CD8-positive, alpha-beta T cell (primary cell): ENCODE measurements at regions of chr17 and their contacts with region 1.

Region 1: DNA sequence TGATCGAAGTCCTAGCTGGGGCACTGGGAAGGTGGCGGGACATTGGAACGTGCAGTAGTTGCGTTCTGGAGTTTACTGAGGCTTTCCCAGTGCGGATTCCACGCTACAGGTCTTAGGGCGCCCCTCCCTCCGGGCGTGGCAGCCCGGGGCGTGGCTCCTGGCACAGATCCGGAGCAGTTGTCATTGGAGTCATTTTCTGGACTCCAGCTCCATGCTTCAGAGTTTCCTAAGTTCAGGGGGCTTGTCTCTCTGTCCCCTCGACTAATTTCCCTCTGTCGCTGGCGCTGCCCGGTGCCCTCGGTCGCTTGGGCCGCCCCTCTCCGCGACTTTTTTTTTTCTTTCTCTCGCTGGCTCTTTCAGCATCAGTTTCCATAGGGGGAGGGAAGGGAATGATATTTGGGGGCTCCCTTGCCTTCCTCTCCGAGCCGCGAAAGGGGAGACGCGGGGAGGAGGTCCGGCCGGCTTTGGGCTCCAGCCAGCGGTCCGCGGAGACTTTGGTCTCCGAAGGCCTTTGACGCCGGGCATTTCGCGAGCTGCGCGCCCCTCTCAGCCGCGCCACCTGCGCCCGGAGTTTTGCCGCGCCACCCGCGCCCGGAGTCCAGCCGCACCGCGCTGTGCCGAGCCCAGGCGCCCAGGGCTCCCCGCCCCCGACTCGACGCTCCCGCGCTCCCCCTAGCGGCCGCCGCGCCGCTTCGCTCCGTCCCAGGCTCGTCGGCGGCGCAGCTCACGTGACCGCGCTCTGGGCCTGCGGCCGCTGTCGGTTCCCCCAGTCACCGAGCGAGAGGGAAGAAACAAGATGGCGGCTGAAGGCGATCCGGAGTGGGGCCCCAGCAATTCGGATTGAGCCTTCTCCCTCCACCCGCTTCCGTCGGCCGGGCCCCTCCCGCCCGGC is at the start of gene BPTF:
- DNase-seq: peak; percentile 82 to 97 (median 92)
- ATAC-seq: peak; percentile 69
- H3K4me3 ChIP-seq: peak within 1 kb of the TSS; percentile 75 to 85
- H3K4me3 Mint-ChIP-seq: peak within 1 kb of the TSS; percentile 99
- H3K27ac ChIP-seq: peak within 1 kb of the TSS; percentile 68 to 80
- H3K27ac Mint-ChIP-seq: peak within 1 kb of the TSS; percentile 100
- H3K4me1 ChIP-seq: peaks cover 33% of the 10 kb centered on the region
- H3K4me1 Mint-ChIP-seq: peaks cover 31% of the 10 kb centered on the region
- H3K27me3 ChIP-seq: no peaks in the 10 kb centered on the region
- H3K27me3 Mint-ChIP-seq: peaks cover 4% of the 10 kb centered on the region
- CTCF ChIP-seq: peak; percentile 94
- total RNA-seq, gene BPTF: 97.8 to 107 TPM

Region 2: DNA sequence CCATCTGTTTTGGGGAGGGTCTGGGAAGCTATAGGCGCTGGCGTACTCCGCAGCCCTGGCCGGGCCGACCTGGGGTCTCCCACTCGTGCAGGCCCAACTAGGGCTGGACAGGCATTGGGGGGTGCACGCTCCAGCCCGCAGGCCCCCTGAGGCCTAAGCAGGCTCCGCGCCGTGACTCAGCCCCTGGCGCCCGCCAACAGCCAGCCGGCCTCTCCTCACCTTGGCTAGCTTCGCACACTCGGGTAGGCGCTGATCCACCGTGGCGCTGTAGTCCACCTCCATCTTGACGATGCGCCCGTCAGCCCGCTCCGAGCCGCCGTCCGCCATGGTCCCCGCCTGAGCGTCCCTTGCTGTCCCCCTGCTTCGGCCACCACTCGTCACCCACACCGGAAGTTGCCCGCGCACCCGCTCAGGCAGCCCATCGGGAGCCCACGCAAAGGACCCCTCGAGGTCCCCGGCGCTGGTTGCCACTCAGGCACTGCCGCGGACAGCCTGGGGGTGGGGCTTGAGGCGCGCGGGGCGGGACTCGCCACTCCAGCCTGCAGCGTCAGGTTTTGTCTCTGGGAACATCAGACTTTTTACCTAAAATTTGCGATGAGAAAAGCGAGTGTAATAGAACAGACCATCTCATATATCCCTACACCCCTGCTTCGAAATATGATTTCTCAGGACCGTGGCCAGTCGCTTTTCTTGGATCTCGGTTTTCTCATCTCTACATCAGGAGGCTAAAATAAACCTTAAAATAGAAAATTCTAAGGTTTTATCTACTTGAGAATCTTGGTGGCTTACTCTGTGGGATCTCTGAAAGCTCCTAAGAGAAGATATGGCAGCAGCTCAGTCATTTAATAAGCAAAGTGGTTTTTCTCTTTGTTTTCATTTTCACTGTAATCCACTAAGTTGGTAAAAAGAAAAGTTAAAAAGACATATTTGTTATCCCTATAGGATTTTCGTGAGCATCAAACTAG is 458.5 kb before region 1 on chr17 and contains the start of gene PSMD12:
- CTCF ChIA-PET with region 1: interaction called, 3 read pairs
- POLR2A ChIA-PET with region 1: no interaction called
- intact Hi-C with region 1: loop called in 1 of 2 experiments (anchors 5 kb)
- DNase-seq: peak; percentile 88 to 97 (median 93)
- ATAC-seq: peak; percentile 97
- H3K4me3 ChIP-seq: peak within 1 kb of the TSS; percentile 87 to 94
- H3K4me3 Mint-ChIP-seq: peak within 1 kb of the TSS; percentile 92
- H3K27ac ChIP-seq: peak within 1 kb of the TSS; percentile 86 to 95
- H3K27ac Mint-ChIP-seq: peak within 1 kb of the TSS; percentile 95
- H3K4me1 ChIP-seq: peaks cover 40% of the 10 kb centered on the region
- H3K4me1 Mint-ChIP-seq: peaks cover 43% of the 10 kb centered on the region
- H3K27me3 ChIP-seq: no peaks in the 10 kb centered on the region
- H3K27me3 Mint-ChIP-seq: no peaks in the 10 kb centered on the region
- CTCF ChIP-seq: no peak
- total RNA-seq, gene PSMD12: 52.1 to 54.9 TPM

Region 3: GRCh38 chr17:67717624-67718329 is 107.2 kb before region 1 on chr17 and contains the start of gene NOL11:
- CTCF ChIA-PET with region 1: interaction called, 3 read pairs
- POLR2A ChIA-PET with region 1: interaction called, 13 read pairs
- intact Hi-C with region 1: loop called (anchors 1 kb)
- DNase-seq: peak; percentile 99 to 100 (median 99)
- ATAC-seq: peak; percentile 94
- H3K4me3 ChIP-seq: peak within 1 kb of the TSS; percentile 93 to 98
- H3K4me3 Mint-ChIP-seq: peak within 1 kb of the TSS; percentile 99
- H3K27ac ChIP-seq: peak within 1 kb of the TSS; percentile 90 to 96
- H3K27ac Mint-ChIP-seq: peak within 1 kb of the TSS; percentile 99
- H3K4me1 ChIP-seq: peaks cover 20% of the 10 kb centered on the region
- H3K4me1 Mint-ChIP-seq: peaks cover 32% of the 10 kb centered on the region
- H3K27me3 ChIP-seq: no peaks in the 10 kb centered on the region
- H3K27me3 Mint-ChIP-seq: peaks cover 5% of the 10 kb centered on the region
- CTCF ChIP-seq: peak; percentile 72
- total RNA-seq, gene NOL11: 91.0 to 94.0 TPM

Region 4: DNA sequence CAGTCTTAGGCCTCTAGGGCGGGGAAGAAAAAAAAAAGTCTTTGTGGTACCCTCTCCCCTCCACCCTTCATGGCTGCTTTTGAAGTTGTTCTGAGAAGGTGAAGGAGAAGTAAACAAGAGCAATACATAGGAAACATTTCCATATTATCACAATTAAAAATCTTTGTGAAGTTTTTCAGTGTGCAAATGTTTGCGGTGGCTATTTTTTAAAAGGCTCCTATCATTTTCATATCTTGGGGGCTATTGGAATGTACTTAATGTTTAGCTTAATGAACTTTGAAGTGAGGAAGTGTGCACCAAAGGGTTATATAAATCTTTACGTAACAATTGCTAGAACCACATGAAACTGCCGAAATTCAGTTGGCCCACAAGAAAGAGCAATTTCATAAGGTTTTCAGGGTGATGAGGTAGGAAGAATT is 99.6 kb before region 1 on chr17:
- CTCF ChIA-PET with region 1: no interaction called
- POLR2A ChIA-PET with region 1: no interaction called
- intact Hi-C with region 1: loop called in 1 of 2 experiments (anchors 2 kb)
- DNase-seq: peak in 3 of 9 experiments; percentile 28 to 74 (median 50)
- ATAC-seq: peak; percentile 74
- H3K4me3 ChIP-seq: peak overlapping the region in 1 of 2 experiments; percentile 3
- H3K4me3 Mint-ChIP-seq: peak overlapping the region; percentile 4
- H3K27ac ChIP-seq: peak overlapping the region; percentile 47 to 50
- H3K27ac Mint-ChIP-seq: peak overlapping the region; percentile 81
- H3K4me1 ChIP-seq: peaks cover 26% of the 10 kb centered on the region
- H3K4me1 Mint-ChIP-seq: peaks cover 38% of the 10 kb centered on the region
- H3K27me3 ChIP-seq: no peaks in the 10 kb centered on the region
- H3K27me3 Mint-ChIP-seq: no peaks in the 10 kb centered on the region
- CTCF ChIP-seq: no peak

Region 5: GRCh38 chr17:67751101-67752074 is 73.6 kb before region 1 on chr17:
- CTCF ChIA-PET with region 1: no interaction called
- POLR2A ChIA-PET with region 1: no interaction called
- intact Hi-C with region 1: no loop called
- DNase-seq: no peak
- ATAC-seq: no peak
- H3K4me3 ChIP-seq: no peak overlapping the region
- H3K4me3 Mint-ChIP-seq: no peak overlapping the region
- H3K27ac ChIP-seq: no peak overlapping the region
- H3K27ac Mint-ChIP-seq: peak overlapping the region; percentile 32
- H3K4me1 ChIP-seq: no peaks in the 10 kb centered on the region
- H3K4me1 Mint-ChIP-seq: peaks cover 6% of the 10 kb centered on the region
- H3K27me3 ChIP-seq: no peaks in the 10 kb centered on the region
- H3K27me3 Mint-ChIP-seq: no peaks in the 10 kb centered on the region
- CTCF ChIP-seq: no peak

Region 6: DNA sequence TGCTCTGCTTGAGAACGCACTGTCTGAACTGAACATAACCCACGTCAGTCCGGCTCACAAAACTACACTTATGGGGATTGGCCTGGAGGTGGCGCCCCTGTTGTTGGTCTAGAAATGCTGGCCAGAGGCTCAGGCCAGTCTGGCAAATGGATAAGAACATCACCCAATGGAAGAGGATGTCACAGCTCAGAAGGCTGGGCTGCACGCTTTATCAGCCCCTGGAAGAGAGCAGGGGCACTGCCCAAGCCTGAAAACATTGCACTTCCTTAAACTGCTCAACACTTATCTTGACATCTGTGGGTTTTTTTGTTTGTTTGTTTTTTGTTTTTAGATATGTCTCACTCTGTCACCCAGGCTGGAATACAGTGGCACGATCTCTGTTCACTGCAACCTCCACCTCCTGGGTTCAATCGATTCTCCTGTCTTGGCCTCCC is 24.5 kb before region 1 on chr17:
- CTCF ChIA-PET with region 1: no interaction called
- POLR2A ChIA-PET with region 1: no interaction called
- intact Hi-C with region 1: loop called (anchors 1 to 2 kb)
- DNase-seq: peak in 8 of 9 experiments; percentile 29 to 62 (median 40)
- ATAC-seq: peak; percentile 49
- H3K4me3 ChIP-seq: no peak overlapping the region
- H3K4me3 Mint-ChIP-seq: no peak overlapping the region
- H3K27ac ChIP-seq: no peak overlapping the region
- H3K27ac Mint-ChIP-seq: no peak overlapping the region
- H3K4me1 ChIP-seq: no peaks in the 10 kb centered on the region
- H3K4me1 Mint-ChIP-seq: peaks cover 2% of the 10 kb centered on the region
- H3K27me3 ChIP-seq: no peaks in the 10 kb centered on the region
- H3K27me3 Mint-ChIP-seq: peaks cover 3% of the 10 kb centered on the region
- CTCF ChIP-seq: peak; percentile 46

Region 7: GRCh38 chr17:67862614-67863217 is 37.7 kb after region 1 on chr17:
- CTCF ChIA-PET with region 1: no interaction called
- POLR2A ChIA-PET with region 1: no interaction called
- intact Hi-C with region 1: loop called (anchors 5 kb)
- DNase-seq: peak in 1 of 9 experiments; percentile 12
- ATAC-seq: no peak
- H3K4me3 ChIP-seq: no peak overlapping the region
- H3K4me3 Mint-ChIP-seq: no peak overlapping the region
- H3K27ac ChIP-seq: no peak overlapping the region
- H3K27ac Mint-ChIP-seq: no peak overlapping the region
- H3K4me1 ChIP-seq: peaks cover 29% of the 10 kb centered on the region
- H3K4me1 Mint-ChIP-seq: peaks cover 72% of the 10 kb centered on the region
- H3K27me3 ChIP-seq: no peaks in the 10 kb centered on the region
- H3K27me3 Mint-ChIP-seq: no peaks in the 10 kb centered on the region
- CTCF ChIP-seq: peak; percentile 17

Region 8: DNA sequence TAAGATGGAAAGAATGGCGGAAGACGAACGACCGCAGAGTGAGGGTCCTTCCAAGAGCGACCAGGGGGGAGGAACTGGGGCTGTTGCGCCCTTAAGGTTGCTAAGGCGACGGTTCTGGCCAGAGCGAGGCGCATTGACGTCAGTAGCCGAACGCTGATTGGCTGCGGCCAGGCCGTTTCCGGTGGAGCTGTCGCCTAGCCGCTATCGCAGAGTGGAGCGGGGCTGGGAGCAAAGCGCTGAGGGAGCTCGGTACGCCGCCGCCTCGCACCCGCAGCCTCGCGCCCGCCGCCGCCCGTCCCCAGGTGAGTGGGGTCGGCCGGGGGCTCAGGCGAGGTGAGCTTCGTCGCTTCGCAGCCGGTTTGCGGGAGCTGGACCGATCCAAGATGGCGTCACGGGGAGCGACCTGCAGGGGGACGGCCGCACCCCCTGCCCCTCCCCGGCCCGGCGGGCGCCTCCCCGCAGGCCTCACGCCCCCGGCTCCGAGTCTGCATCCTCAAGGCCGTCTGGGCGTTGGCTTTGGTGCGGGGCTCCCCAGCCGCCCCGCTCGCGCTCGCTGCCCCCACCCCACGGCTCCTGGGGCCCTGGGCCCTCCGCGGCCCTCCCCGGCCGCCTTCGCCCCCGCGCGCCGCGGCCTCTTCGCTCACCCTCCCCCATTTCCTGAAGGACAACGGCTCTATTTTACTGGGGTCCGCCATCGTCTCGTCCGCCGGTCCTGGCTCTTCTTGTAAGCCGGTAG is 687.4 kb after region 1 on chr17 and contains the start of gene PRKAR1A:
- CTCF ChIA-PET with region 1: no interaction called
- POLR2A ChIA-PET with region 1: no interaction called
- intact Hi-C with region 1: loop called in 1 of 2 experiments (anchors 5 kb)
- DNase-seq: peak; percentile 88 to 98 (median 94)
- ATAC-seq: peak; percentile 79
- H3K4me3 ChIP-seq: peak within 1 kb of the TSS; percentile 85 to 87
- H3K4me3 Mint-ChIP-seq: peak within 1 kb of the TSS; percentile 100
- H3K27ac ChIP-seq: peak within 1 kb of the TSS; percentile 99
- H3K27ac Mint-ChIP-seq: peak within 1 kb of the TSS; percentile 100
- H3K4me1 ChIP-seq: peaks cover 22% of the 10 kb centered on the region
- H3K4me1 Mint-ChIP-seq: peaks cover 54% of the 10 kb centered on the region
- H3K27me3 ChIP-seq: no peaks in the 10 kb centered on the region
- H3K27me3 Mint-ChIP-seq: no peaks in the 10 kb centered on the region
- CTCF ChIP-seq: no peak
- total RNA-seq, gene PRKAR1A: 61.2 to 63.5 TPM